ENCODE measurements at regions of chr11 and their contacts with region 1.

Region 1: GRCh38 chr11:6269994-6270393 is 10.4 kb downstream of the CCKBR start:
- DNase-seq: no peak
- H3K4me3 Mint-ChIP-seq: no peak overlapping the region
- H3K27ac Mint-ChIP-seq: no peak overlapping the region
- H3K4me1 Mint-ChIP-seq: no peaks in the 10 kb centered on the region
- H3K27me3 Mint-ChIP-seq: peaks cover 29% of the 10 kb centered on the region

Region 2: GRCh38 chr11:6022956-6023355 is 247.0 kb before region 1 on chr11:
- intact Hi-C with region 1: loop called (anchors 10 kb)
- DNase-seq: no peak
- H3K4me3 Mint-ChIP-seq: no peak overlapping the region
- H3K27ac Mint-ChIP-seq: no peak overlapping the region
- H3K4me1 Mint-ChIP-seq: no peaks in the 10 kb centered on the region
- H3K27me3 Mint-ChIP-seq: peaks cover 30% of the 10 kb centered on the region

Measured in activated T-helper 2 cell treated with anti-CD3 and anti-CD28 coated beads, Interferon-gamma antibody, Interleukin-2, Interleukin-4, amounts not matched to agents 10 μg/mL and 5 μg/mL and 100 μg/mL, durations not matched to agents 14 hours and 24 hours and 36 hours (primary cell).